ENCODE measurements at regions of chr7 and their contacts with region 1.

Region 1: GRCh38 chr7:128409596-128410160 is at the start of gene IMPDH1:
- DNase-seq: peak; percentile 96
- H3K4me3 Mint-ChIP-seq: peak within 1 kb of the TSS; percentile 93
- H3K27ac Mint-ChIP-seq: peak within 1 kb of the TSS; percentile 87
- H3K4me1 Mint-ChIP-seq: peaks cover 37% of the 10 kb centered on the region
- H3K27me3 Mint-ChIP-seq: peaks cover 22% of the 10 kb centered on the region
- total RNA-seq, gene IMPDH1: 102 and 105 TPM in 2 replicates

Region 2: GRCh38 chr7:128266883-128267607 is 142.6 kb before region 1 on chr7:
- intact Hi-C with region 1: no loop called
- DNase-seq: no peak
- H3K4me3 Mint-ChIP-seq: no peak overlapping the region
- H3K27ac Mint-ChIP-seq: no peak overlapping the region
- H3K4me1 Mint-ChIP-seq: peaks cover 1% of the 10 kb centered on the region
- H3K27me3 Mint-ChIP-seq: peaks cover 25% of the 10 kb centered on the region

Region 3: GRCh38 chr7:128343554-128344430 is 65.9 kb before region 1 on chr7 and contains the start of gene RBM28:
- intact Hi-C with region 1: no loop called
- DNase-seq: peak; percentile 96
- H3K4me3 Mint-ChIP-seq: peak within 1 kb of the TSS; percentile 98
- H3K27ac Mint-ChIP-seq: peak within 1 kb of the TSS; percentile 96
- H3K4me1 Mint-ChIP-seq: peaks cover 26% of the 10 kb centered on the region
- H3K27me3 Mint-ChIP-seq: peaks cover 15% of the 10 kb centered on the region
- total RNA-seq, gene RBM28: 76.7 and 85.8 TPM in 2 replicates

Region 4: GRCh38 chr7:128398016-128398840 is 11.4 kb before region 1 on chr7:
- intact Hi-C with region 1: loop called (anchors 1 kb)
- DNase-seq: peak; percentile 81
- H3K4me3 Mint-ChIP-seq: no peak overlapping the region
- H3K27ac Mint-ChIP-seq: no peak overlapping the region
- H3K4me1 Mint-ChIP-seq: no peaks in the 10 kb centered on the region
- H3K27me3 Mint-ChIP-seq: no peaks in the 10 kb centered on the region

Region 5: DNA sequence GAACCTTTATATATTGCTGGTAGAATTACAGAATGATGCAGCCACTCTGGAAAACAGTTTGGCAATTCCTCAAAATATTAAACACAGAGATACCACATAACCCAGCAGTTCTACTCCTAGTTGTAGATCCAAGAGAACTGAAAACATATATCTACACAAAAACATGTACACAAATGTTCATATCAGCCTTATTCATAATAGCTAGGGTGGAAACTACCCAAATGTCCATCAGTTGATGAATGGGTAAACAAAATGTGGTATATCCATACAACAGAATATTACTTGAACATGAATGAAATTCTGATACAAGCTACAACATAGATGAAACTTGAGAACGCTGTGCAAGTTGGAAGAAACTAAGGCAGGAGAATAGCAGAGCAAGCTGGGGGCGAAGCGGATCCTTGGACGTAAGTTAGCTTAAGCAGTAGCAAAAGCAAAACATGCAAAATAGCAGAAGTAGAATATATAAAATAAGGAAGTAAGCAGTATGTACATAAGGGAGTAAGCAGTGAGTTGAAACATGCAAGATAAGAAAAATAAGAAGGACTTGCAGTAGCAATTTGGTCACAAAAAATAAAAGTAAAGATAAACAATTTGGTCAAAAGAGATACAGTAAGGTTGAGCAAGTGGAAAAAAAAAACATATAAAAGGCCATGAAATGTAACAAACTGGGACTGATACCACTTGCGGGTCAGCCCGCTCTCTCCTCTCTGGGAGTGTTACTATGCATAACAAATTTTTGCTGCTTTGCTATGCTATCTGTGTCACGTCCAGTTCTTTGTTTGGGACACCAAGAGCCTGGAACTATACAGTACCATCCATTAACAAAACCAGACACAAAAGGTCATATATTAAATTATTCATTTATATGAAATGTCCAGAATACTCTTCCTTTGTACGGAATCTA is 28.0 kb after region 1 on chr7:
- intact Hi-C with region 1: no loop called
- DNase-seq: no peak
- H3K4me3 Mint-ChIP-seq: no peak overlapping the region
- H3K27ac Mint-ChIP-seq: no peak overlapping the region
- H3K4me1 Mint-ChIP-seq: peaks cover 2% of the 10 kb centered on the region
- H3K27me3 Mint-ChIP-seq: peaks cover 15% of the 10 kb centered on the region

Region 6: GRCh38 chr7:128530855-128531104 is 121.1 kb after region 1 on chr7:
- intact Hi-C with region 1: loop called (anchors 10 kb)
- DNase-seq: no peak
- H3K4me3 Mint-ChIP-seq: peak overlapping the region; percentile 26
- H3K27ac Mint-ChIP-seq: no peak overlapping the region
- H3K4me1 Mint-ChIP-seq: peaks cover 25% of the 10 kb centered on the region
- H3K27me3 Mint-ChIP-seq: no peaks in the 10 kb centered on the region

Region 7: GRCh38 chr7:128713794-128714193 is 304.1 kb after region 1 on chr7:
- intact Hi-C with region 1: no loop called
- DNase-seq: no peak
- H3K4me3 Mint-ChIP-seq: no peak overlapping the region
- H3K27ac Mint-ChIP-seq: no peak overlapping the region
- H3K4me1 Mint-ChIP-seq: no peaks in the 10 kb centered on the region
- H3K27me3 Mint-ChIP-seq: peaks cover 12% of the 10 kb centered on the region